Heart right ventricle (tissue), 16 donors: ENCODE measurements at regions of chr6 and their contacts with region 1.

Region 1: GRCh38 chr6:112180095-112180820 is 74.1 kb downstream of the LAMA4 start:
- DNase-seq: peak in 1 of 2 donors; percentile 76
- ATAC-seq: peak in 6 of 8 donors; percentile 53 to 87 (median 74)
- H3K4me3 ChIP-seq: no peak overlapping the region
- H3K27ac ChIP-seq: peak overlapping the region in 3 of 10 donors; percentile 27 to 45 (median 34)
- H3K4me1 ChIP-seq: peaks cover 0 to 22% (median 7%) of the 10 kb centered on the region in 9 donors
- H3K27me3 ChIP-seq: no peaks in the 10 kb centered on the region
- CTCF ChIP-seq: peak; percentile 37 to 89 (median 79)

Region 2: GRCh38 chr6:112128208-112128607 is 52.0 kb before region 1 on chr6:
- intact Hi-C with region 1: no loop called
- DNase-seq: no peak
- ATAC-seq: peak in 4 of 8 donors; percentile 31 to 69 (median 40)
- H3K4me3 ChIP-seq: no peak overlapping the region
- H3K27ac ChIP-seq: no peak overlapping the region
- H3K4me1 ChIP-seq: peaks cover 0 to 5% (median 0%) of the 10 kb centered on the region in 9 donors
- H3K27me3 ChIP-seq: no peaks in the 10 kb centered on the region
- CTCF ChIP-seq: no peak

Region 3: GRCh38 chr6:112282221-112282620 is 102.0 kb after region 1 on chr6:
- intact Hi-C with region 1: loop called in 7 of 10 experiments (anchors 1 to 10 kb)
- DNase-seq: peak; percentile 46 to 77
- ATAC-seq: peak; percentile 90 to 94 (median 93)
- H3K4me3 ChIP-seq: no peak overlapping the region
- H3K27ac ChIP-seq: peak overlapping the region in 8 of 10 donors; percentile 18 to 65 (median 52)
- H3K4me1 ChIP-seq: peaks cover 0 to 68% (median 40%) of the 10 kb centered on the region in 9 donors
- H3K27me3 ChIP-seq: no peaks in the 10 kb centered on the region
- CTCF ChIP-seq: peak; percentile 19 to 73 (median 48)

Region 4: DNA sequence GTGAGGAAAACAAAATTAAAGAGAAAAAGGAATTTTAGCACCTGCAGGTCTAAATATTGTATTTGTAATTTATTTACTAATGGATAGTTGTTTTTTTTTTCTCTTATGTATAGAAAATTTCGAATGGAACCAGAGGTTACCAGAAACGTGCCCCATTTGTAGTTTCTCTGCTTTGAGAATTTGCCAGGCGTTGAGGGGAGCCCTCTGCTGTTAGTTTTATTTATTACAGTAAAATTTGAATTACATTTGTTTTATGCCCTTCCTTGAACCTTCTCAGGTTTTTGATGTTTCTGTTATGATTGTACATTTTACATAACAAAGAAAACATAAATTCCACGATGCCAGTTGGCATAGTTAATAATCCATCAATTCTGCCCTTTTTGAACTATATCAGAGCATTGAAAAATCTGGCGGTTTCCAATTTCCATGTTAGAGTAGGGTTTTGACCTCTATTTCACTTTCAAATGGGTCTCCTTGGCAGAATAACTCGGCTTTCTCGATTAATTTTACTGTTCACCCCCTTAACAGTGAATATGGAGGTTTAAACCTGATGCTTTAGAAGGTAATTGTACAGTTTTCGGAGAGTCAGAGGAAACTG is 131.8 kb after region 1 on chr6:
- intact Hi-C with region 1: loop called (anchors 1 to 5 kb)
- DNase-seq: peak in 1 of 2 donors; percentile 13
- ATAC-seq: peak in 2 of 8 donors; percentile 51 to 60
- H3K4me3 ChIP-seq: no peak overlapping the region
- H3K27ac ChIP-seq: peak overlapping the region in 2 of 10 donors; percentile 11 to 13
- H3K4me1 ChIP-seq: peaks cover 4 to 31% (median 11%) of the 10 kb centered on the region in 9 donors
- H3K27me3 ChIP-seq: no peaks in the 10 kb centered on the region
- CTCF ChIP-seq: peak; percentile 60 to 87 (median 70)

Region 5: DNA sequence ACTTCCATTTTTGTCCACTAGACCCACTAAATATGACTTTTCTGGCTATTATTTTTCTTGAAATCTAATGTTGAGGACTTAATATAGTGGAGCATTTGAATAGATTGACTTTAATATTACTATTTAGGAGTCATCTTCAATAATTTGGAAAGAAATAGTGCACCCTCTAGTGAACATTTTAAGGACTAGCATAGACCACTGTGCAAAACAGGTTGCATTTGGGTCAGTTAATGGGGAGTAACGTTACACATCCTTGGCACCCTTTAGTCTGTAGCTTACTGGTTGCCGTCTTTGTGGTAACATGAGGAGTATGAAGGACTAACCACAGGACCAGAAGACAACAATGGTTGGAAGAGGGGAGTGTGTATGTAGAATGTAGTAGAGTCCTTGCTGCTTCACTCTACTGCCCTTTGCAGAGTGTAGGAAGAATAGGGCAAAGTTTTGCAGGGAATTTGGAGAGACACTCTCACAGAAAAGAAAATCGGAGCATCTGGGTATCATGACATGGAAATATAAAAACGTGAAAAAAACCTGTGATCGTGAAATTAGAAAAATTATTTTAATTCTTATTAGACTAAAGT is 192.1 kb after region 1 on chr6:
- intact Hi-C with region 1: loop called in 2 of 10 experiments (anchors 5 to 10 kb)
- DNase-seq: no peak
- ATAC-seq: peak in 4 of 8 donors; percentile 42 to 46 (median 44)
- H3K4me3 ChIP-seq: no peak overlapping the region
- H3K27ac ChIP-seq: no peak overlapping the region
- H3K4me1 ChIP-seq: peaks cover 0 to 1% (median 0%) of the 10 kb centered on the region in 9 donors
- H3K27me3 ChIP-seq: peaks cover 0 to 13% (median 6%) of the 10 kb centered on the region in 7 donors
- CTCF ChIP-seq: peak; percentile 14 to 60 (median 46)